Mammary epithelial cell (primary cell): ENCODE measurements at regions of chr1 and their contacts with region 1.

Region 1: DNA sequence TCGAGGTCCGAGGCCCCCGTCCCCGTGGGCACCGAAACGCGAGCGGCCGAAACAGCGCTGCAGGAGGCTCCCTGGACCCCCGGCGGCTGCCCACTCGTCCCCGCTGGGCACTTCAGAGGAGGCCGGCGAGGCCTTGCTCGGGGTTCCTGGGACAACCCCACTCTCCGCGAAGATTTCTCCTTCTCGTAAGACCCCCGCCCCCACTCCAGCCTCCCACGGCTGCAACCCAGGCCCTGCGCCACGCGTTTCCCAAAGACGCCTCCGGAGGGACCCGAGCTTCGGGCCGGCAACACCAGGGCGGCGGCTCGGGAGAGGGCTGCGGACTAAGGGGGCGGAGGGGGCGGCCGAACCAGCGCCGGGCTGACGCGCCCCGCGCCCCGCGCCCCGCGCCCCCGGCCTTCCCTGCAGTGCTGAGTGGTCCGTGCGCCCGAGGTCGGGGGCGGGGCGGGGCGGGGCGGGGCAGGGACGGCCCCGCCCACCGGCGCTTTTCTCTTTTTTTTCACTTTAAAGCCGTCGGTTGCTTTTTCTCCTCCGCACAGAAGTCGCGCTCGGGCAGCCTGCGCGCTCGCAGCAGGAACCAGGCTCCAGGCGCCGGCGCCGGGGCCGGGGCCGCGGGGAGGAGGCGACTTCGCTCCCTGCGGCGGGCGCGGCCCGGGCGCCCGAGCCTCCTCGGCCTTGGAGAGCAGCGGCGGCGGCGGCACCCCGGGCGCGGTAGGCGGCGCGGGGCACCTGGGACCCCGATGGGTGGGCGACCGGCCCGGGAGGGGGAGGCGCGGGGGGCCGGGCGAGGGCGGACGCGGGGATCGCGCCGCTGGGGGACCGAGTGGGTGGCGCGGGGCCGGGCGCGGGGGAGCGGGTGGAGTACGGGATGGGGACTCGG is at the start of gene SPSB1:
- DNase-seq: peak; percentile 73
- H3K4me3 ChIP-seq: peak within 1 kb of the TSS; percentile 53 to 96 (median 74)
- H3K27ac ChIP-seq: peak within 1 kb of the TSS; percentile 63
- H3K4me1 ChIP-seq: peaks cover 32% of the 10 kb centered on the region
- H3K27me3 ChIP-seq: no peaks in the 10 kb centered on the region
- CTCF ChIP-seq: no peak
- total RNA-seq, gene SPSB1: 18.2 to 56.7 TPM

Region 2: GRCh38 chr1:9110669-9111356 is 181.8 kb before region 1 on chr1:
- CTCF ChIA-PET with region 1: no interaction called
- dilution Hi-C with region 1: no loop called
- in situ Hi-C with region 1: no loop called
- intact Hi-C with region 1: loop called (anchors 1 kb)
- DNase-seq: peak; percentile 97
- H3K4me3 ChIP-seq: no peak overlapping the region
- H3K27ac ChIP-seq: no peak overlapping the region
- H3K4me1 ChIP-seq: peaks cover 13% of the 10 kb centered on the region
- H3K27me3 ChIP-seq: no peaks in the 10 kb centered on the region
- CTCF ChIP-seq: peak; percentile 87 to 93

Region 3: GRCh38 chr1:9269078-9269501 is 23.5 kb before region 1 on chr1:
- CTCF ChIA-PET with region 1: interaction called, 3 read pairs
- dilution Hi-C with region 1: no loop called
- in situ Hi-C with region 1: no loop called
- intact Hi-C with region 1: loop called (anchors 1 kb)
- DNase-seq: peak; percentile 15
- H3K4me3 ChIP-seq: no peak overlapping the region
- H3K27ac ChIP-seq: no peak overlapping the region
- H3K4me1 ChIP-seq: no peaks in the 10 kb centered on the region
- H3K27me3 ChIP-seq: no peaks in the 10 kb centered on the region
- CTCF ChIP-seq: no peak

Region 4: GRCh38 chr1:9340172-9340854 is 47.7 kb after region 1 on chr1:
- CTCF ChIA-PET with region 1: no interaction called
- dilution Hi-C with region 1: no loop called
- in situ Hi-C with region 1: no loop called
- intact Hi-C with region 1: loop called (anchors 1 kb)
- DNase-seq: peak; percentile 84
- H3K4me3 ChIP-seq: peak overlapping the region in 1 of 3 experiments; percentile 6
- H3K27ac ChIP-seq: no peak overlapping the region
- H3K4me1 ChIP-seq: peaks cover 29% of the 10 kb centered on the region
- H3K27me3 ChIP-seq: no peaks in the 10 kb centered on the region
- CTCF ChIP-seq: peak in 1 of 2 donors; percentile 1

Region 5: DNA sequence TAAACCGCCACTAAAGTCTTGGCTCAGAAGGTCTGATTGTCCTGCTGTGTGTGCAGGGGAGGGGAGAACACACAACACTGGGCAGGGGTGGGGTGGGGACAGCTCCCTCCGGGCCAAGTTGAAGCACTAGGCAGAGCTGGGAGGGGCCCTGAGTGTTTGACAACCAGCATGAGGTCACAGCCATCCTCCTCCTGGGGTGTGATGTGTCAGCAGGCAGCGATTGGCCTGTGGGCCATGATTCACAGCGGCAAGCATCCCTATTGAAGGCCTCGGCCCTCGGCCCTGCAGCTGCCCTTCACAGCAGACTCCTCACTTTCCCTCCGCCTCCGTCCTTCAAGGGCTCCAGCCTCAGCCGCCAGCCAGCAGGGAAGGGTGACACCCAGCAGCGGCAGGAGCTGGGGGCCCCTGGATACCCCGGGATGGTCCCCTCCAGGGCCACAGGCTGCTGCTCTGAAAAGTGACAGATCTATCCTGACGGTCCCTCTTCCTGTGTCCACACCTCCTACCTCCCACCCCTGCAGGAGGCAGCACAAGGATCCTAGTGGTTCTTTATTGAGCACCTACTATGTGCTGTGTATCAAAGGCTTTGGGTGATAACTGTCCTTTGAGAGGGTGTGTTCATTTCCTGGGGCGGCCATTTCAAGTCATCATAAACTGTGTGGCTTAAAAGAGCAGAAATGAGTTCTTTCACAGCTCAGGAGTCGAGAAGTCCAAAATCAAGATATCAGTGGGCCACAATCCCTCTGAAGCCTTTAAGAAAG is 180.6 kb after region 1 on chr1:
- CTCF ChIA-PET with region 1: no interaction called
- dilution Hi-C with region 1: loop called (anchors 25 kb)
- in situ Hi-C with region 1: loop called in 1 of 2 experiments (anchors 10 kb)
- intact Hi-C with region 1: no loop called
- DNase-seq: peak; percentile 93
- H3K4me3 ChIP-seq: no peak overlapping the region
- H3K27ac ChIP-seq: no peak overlapping the region
- H3K4me1 ChIP-seq: peaks cover 29% of the 10 kb centered on the region
- H3K27me3 ChIP-seq: no peaks in the 10 kb centered on the region
- CTCF ChIP-seq: no peak

Region 6: GRCh38 chr1:9588551-9589143 is 296.0 kb after region 1 on chr1 and contains the start of gene TMEM201:
- CTCF ChIA-PET with region 1: no interaction called
- dilution Hi-C with region 1: no loop called
- in situ Hi-C with region 1: loop called in 1 of 2 experiments (anchors 25 kb)
- intact Hi-C with region 1: no loop called
- DNase-seq: peak; percentile 89
- H3K4me3 ChIP-seq: peak within 1 kb of the TSS; percentile 58 to 72 (median 64)
- H3K27ac ChIP-seq: peak within 1 kb of the TSS; percentile 61
- H3K4me1 ChIP-seq: peaks cover 26% of the 10 kb centered on the region
- H3K27me3 ChIP-seq: no peaks in the 10 kb centered on the region
- CTCF ChIP-seq: peak; percentile 37 to 64
- total RNA-seq, gene TMEM201: 6.8 to 15.9 TPM